Spleen (tissue), 13 donors: ENCODE measurements at regions of chr5 and their contacts with region 1.

Region 1: GRCh38 chr5:77015938-77016569 is 14.2 kb upstream of the AGGF1 start:
- DNase-seq: no peak
- H3K4me3 ChIP-seq: no peak overlapping the region
- H3K27ac ChIP-seq: no peak overlapping the region
- H3K4me1 ChIP-seq: no peaks in the 10 kb centered on the region
- H3K27me3 ChIP-seq: peaks cover 0 to 3% (median 0%) of the 10 kb centered on the region in 7 donors
- CTCF ChIP-seq: peak in 6 of 11 experiments; percentile 14 to 48 (median 27)
- POLR2A ChIP-seq: no peak

Region 2: GRCh38 chr5:76867827-76868693 is 148.0 kb before region 1 on chr5:
- intact Hi-C with region 1: loop called (anchors 5 kb)
- DNase-seq: no peak
- H3K4me3 ChIP-seq: no peak overlapping the region
- H3K27ac ChIP-seq: no peak overlapping the region
- H3K4me1 ChIP-seq: peaks cover 0 to 5% (median 0%) of the 10 kb centered on the region in 6 donors
- H3K27me3 ChIP-seq: no peaks in the 10 kb centered on the region
- CTCF ChIP-seq: peak; percentile 58 to 88 (median 79)
- POLR2A ChIP-seq: no peak

Region 3: GRCh38 chr5:77155179-77155785 is 139.2 kb after region 1 on chr5:
- intact Hi-C with region 1: no loop called
- DNase-seq: no peak
- H3K4me3 ChIP-seq: no peak overlapping the region
- H3K27ac ChIP-seq: no peak overlapping the region
- H3K4me1 ChIP-seq: no peaks in the 10 kb centered on the region
- H3K27me3 ChIP-seq: no peaks in the 10 kb centered on the region
- CTCF ChIP-seq: no peak
- POLR2A ChIP-seq: no peak

Region 4: GRCh38 chr5:77189421-77189820 is 173.4 kb after region 1 on chr5:
- intact Hi-C with region 1: no loop called
- DNase-seq: no peak
- H3K4me3 ChIP-seq: no peak overlapping the region
- H3K27ac ChIP-seq: no peak overlapping the region
- H3K4me1 ChIP-seq: no peaks in the 10 kb centered on the region
- H3K27me3 ChIP-seq: peaks cover 0 to 9% (median 0%) of the 10 kb centered on the region in 7 donors
- CTCF ChIP-seq: no peak
- POLR2A ChIP-seq: no peak